ENCODE measurements at regions of chr2 and their contacts with region 1.

Region 1: GRCh38 chr2:241649404-241649803 is 11.9 kb downstream of the ATG4B start:
- DNase-seq: no peak
- H3K4me3 ChIP-seq: no peak overlapping the region
- H3K27ac ChIP-seq: no peak overlapping the region
- H3K4me1 ChIP-seq: peaks cover 0 to 36% (median 14%) of the 10 kb centered on the region in 4 donors
- H3K27me3 ChIP-seq: no peaks in the 10 kb centered on the region
- CTCF ChIP-seq: no peak
- EP300 ChIP-seq: no peak
- POLR2A ChIP-seq: no peak

Region 2: DNA sequence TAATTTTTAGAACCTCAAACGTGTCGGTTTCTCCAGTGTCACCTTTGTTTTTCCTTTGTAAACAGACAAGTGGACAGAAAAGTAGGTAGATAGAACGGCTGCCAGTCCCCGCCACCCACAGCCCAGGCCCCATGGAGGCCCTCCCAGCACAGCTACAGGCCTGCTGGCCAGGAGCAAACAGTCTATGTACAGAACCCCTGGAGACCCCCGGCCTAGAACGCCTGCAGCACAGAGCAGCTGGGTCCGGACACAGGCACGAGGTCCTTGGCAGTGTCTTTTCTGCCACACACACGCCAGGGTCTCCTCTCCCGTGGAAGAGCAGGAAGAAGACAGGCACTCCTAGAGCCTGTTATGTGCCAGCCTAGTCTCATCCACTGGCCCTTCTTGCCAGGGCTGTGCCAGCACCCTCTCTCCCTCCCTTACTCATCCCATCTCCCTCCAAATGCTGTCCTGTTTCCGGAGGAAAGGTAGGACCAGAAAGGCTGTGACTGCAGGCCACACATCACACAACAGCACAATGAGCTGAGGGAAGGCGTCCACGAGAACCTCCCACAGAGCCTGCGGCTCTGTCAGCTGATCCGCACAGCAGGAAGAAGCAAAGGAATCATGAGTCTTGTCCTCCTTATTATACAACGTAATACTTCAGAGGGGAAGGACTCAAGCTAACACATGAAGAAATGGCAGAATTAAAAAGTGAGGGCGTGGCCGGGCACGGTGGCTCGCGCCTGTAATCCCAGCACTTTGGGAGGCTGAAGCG is 29.6 kb after region 1 on chr2:
- in situ Hi-C with region 1: no loop called
- intact Hi-C with region 1: loop called (anchors 1 kb)
- DNase-seq: no peak
- H3K4me3 ChIP-seq: no peak overlapping the region
- H3K27ac ChIP-seq: no peak overlapping the region
- H3K4me1 ChIP-seq: peaks cover 0 to 10% (median 2%) of the 10 kb centered on the region in 4 donors
- H3K27me3 ChIP-seq: no peaks in the 10 kb centered on the region
- CTCF ChIP-seq: no peak
- EP300 ChIP-seq: no peak
- POLR2A ChIP-seq: no peak